ENCODE measurements at regions of chr17 and their contacts with region 1.

Region 1: DNA sequence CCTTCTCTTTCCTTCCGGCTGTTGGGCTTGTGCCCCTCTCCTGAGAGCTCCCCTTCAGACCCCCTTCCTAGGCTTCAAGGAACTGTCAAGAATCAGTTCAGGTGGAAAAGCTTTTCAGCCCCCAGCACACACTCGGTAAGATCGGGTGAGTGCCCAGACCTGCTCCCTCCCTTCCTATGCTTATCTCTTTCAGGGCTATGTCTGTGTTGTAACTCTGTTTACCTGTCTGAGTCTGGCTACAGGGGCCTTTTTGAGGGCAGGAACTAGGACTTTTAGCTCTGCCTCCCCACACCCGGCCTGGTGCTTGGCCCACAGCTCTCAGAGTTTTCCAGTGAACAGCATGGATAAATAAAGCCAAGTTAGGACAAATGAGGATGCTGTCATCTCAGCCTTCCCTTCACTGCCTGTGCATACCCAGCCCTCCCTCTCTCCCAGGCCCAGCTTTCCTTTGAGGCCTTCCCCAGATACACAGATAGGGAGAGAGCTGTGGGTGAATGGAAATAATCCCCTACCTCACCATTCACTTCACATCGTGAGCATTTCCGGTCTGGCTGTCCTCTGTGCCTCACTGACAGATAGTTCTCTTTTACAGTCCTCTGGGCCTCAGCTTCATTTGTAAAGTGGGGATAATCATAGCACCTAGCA is 5.7 kb upstream of the MRPS23 start:
- DNase-seq: no peak
- H3K27ac ChIP-seq: no peak overlapping the region; the same call in 1 of the 2 replicates
- CTCF ChIP-seq: no peak

Region 2: GRCh38 chr17:57782062-57782490 is 73.4 kb before region 1 on chr17:
- CTCF ChIA-PET with region 1: no interaction called
- POLR2A ChIA-PET with region 1: no interaction called
- DNase-seq: no peak
- H3K27ac ChIP-seq: no peak overlapping the region
- CTCF ChIP-seq: no peak

Region 3: GRCh38 chr17:57875309-57876115 is 20.0 kb after region 1 on chr17:
- CTCF ChIA-PET with region 1: interaction called, 14 read pairs
- POLR2A ChIA-PET with region 1: interaction called, 3 read pairs
- DNase-seq: peak; percentile 94
- H3K27ac ChIP-seq: peak overlapping the region; percentile 97
- CTCF ChIP-seq: peak; percentile 73

Region 4: DNA sequence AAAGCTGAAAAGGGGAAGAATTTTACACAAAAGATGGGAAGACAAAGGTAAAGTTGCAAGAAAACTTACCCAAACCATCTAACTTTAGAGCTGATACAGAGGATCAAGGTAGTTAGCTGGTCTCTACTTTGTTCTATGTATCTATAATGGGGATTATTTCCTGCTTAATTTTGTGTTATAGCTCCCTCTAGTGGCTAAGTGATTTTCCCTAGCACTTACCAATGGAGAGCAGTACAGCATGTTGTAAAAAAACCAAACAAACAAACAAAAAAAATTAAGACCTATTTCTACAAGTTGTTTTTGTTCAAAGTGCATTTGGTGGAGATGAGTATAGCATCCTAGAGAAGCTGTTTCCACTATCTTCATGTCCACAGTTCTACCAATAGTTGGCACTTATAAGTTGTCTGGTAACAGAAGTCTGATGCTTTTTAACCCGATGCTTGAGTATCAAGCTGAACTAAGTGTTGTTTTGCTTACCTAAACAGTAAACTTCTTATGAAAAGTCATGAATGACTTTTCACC is 144.0 kb after region 1 on chr17:
- CTCF ChIA-PET with region 1: interaction called, 16 read pairs
- POLR2A ChIA-PET with region 1: interaction called, 4 read pairs
- DNase-seq: no peak
- H3K27ac ChIP-seq: no peak overlapping the region
- CTCF ChIP-seq: peak; percentile 90

Measured in RWPE1 (cell line).